ENCODE measurements at regions of chr12 and their contacts with region 1.

Region 1: DNA sequence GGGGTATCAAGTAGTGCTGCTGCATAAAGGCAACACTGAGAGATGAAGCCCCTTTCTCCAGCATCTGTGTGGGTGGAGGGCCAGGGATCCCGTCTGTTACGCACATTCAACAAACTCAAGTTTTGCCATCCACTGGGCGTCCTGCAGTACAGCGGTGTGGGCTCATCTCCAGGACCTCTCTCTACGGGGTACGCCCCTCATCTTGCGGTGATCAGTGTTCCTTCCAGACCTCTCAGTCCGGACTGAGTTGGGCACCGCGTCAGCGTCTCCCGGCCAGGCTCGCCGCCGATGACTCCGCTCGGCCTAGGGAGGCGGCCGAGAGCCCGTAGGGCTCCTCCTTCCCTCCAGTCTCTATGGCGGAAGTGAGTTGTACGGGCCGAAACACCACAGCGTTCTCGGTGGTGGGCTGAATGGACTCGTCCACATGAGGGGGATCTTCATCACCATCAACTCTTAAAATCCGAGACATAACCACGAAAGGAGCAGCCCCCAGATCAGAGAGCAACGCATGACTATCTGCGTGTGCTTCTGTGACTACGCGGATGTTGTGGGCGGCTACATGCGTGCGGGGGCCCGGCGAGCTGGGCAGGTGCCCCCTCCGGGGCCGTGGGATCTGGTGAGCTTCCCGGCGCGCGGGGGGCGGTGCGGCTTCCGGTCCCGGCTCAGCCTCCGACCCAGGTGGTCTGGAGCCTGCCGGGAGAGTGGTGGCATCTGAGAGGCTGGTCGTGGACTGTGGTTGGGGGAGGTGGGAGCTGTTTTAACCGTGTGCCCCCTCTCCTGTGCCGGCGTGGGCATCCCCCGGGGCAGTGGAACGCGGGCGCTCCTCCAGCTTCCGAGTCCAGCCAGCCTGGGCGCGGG is at the start of gene ATG101:
- DNase-seq: peak; percentile 90 to 92 (median 91)
- H3K4me3 ChIP-seq: peak within 1 kb of the TSS; percentile 92 to 96
- H3K4me3 Mint-ChIP-seq: peak within 1 kb of the TSS; percentile 94 to 100 (median 98)
- H3K27ac ChIP-seq: peak within 1 kb of the TSS; percentile 87
- H3K27ac Mint-ChIP-seq: peak within 1 kb of the TSS; percentile 94 to 100 (median 100)
- H3K4me1 ChIP-seq: peaks cover 42% of the 10 kb centered on the region
- H3K4me1 Mint-ChIP-seq: peaks cover 36 to 48% (median 41%) of the 10 kb centered on the region in 4 donors
- H3K27me3 ChIP-seq: no peaks in the 10 kb centered on the region
- H3K27me3 Mint-ChIP-seq: peaks cover 0 to 2% of the 10 kb centered on the region in 2 donors
- total RNA-seq, gene ATG101: 24.4 to 27.0 TPM

Region 2: DNA sequence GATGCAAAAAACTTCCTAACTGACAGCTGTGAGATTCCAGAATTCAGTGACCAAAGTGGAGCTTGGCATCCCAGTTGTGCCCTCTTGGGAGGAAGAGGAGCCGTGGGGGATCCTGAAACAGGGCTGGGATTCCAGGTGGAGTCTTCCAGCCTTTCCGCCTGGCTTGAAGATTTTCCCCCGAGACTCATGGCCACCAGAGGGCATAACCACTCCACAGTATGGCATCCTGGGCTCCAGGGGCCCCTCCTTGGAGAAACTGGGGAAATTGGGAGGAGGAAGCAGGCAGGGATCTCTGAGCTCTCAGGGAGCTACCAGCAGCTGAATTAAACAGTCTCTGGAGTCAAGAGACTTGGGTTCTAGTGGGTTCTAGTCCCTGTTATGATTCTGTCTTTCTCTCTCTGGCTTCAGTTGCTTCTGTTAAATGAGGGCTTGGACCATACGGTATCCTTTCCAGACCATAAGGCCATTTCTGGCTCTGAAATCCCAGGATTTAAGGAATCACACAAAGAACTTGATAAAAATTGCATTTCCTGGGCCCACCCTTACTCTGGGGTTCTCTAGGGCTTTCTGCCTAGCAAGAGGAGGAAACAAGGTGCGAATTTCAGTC is 65.4 kb before region 1 on chr12:
- CTCF ChIA-PET with region 1: interaction called, 3 read pairs
- POLR2A ChIA-PET with region 1: interaction called, 18 read pairs
- intact Hi-C with region 1: no loop called
- DNase-seq: no peak
- H3K4me3 ChIP-seq: no peak overlapping the region
- H3K4me3 Mint-ChIP-seq: no peak overlapping the region
- H3K27ac ChIP-seq: no peak overlapping the region
- H3K27ac Mint-ChIP-seq: peak overlapping the region in 2 of 7 donors; percentile 23 to 27
- H3K4me1 ChIP-seq: peaks cover 24% of the 10 kb centered on the region
- H3K4me1 Mint-ChIP-seq: peaks cover 12 to 35% (median 22%) of the 10 kb centered on the region in 4 donors
- H3K27me3 ChIP-seq: no peaks in the 10 kb centered on the region
- H3K27me3 Mint-ChIP-seq: peaks cover 0 to 2% of the 10 kb centered on the region in 2 donors

Region 3: GRCh38 chr12:52050761-52051541 is 18.6 kb before region 1 on chr12 and contains the start of gene NR4A1:
- CTCF ChIA-PET with region 1: interaction called, 14 read pairs
- POLR2A ChIA-PET with region 1: interaction called, 46 read pairs
- intact Hi-C with region 1: loop called (anchors 1 kb)
- DNase-seq: peak; percentile 98 to 99 (median 99)
- H3K4me3 ChIP-seq: peak within 1 kb of the TSS; percentile 84 to 86
- H3K4me3 Mint-ChIP-seq: peak within 1 kb of the TSS; percentile 87 to 96 (median 92)
- H3K27ac ChIP-seq: peak within 1 kb of the TSS; percentile 95
- H3K27ac Mint-ChIP-seq: peak within 1 kb of the TSS; percentile 98 to 100 (median 99)
- H3K4me1 ChIP-seq: peaks cover 33% of the 10 kb centered on the region
- H3K4me1 Mint-ChIP-seq: peaks cover 18 to 45% (median 31%) of the 10 kb centered on the region in 4 donors
- H3K27me3 ChIP-seq: no peaks in the 10 kb centered on the region
- H3K27me3 Mint-ChIP-seq: no peaks in the 10 kb centered on the region
- total RNA-seq, gene NR4A1: 1.1 to 1.3 TPM

Region 4: GRCh38 chr12:52082988-52083637 is 13.6 kb after region 1 on chr12:
- CTCF ChIA-PET with region 1: interaction called, 20 read pairs
- POLR2A ChIA-PET with region 1: interaction called, 8 read pairs
- intact Hi-C with region 1: loop called (anchors 1 kb)
- DNase-seq: peak; percentile 58 to 71 (median 66)
- H3K4me3 ChIP-seq: no peak overlapping the region
- H3K4me3 Mint-ChIP-seq: peak overlapping the region in 1 of 8 donors; percentile 15
- H3K27ac ChIP-seq: no peak overlapping the region
- H3K27ac Mint-ChIP-seq: peak overlapping the region in 5 of 7 donors; percentile 17 to 79 (median 57)
- H3K4me1 ChIP-seq: peaks cover 8% of the 10 kb centered on the region
- H3K4me1 Mint-ChIP-seq: peaks cover 3 to 11% (median 7%) of the 10 kb centered on the region in 4 donors
- H3K27me3 ChIP-seq: no peaks in the 10 kb centered on the region
- H3K27me3 Mint-ChIP-seq: peaks cover 8 to 13% of the 10 kb centered on the region in 2 donors

Measured in CD4-positive, alpha-beta memory T cell (primary cell).